Thyroid gland (tissue), 4 donors: ENCODE measurements at regions of chr7 and their contacts with region 1.

Region 1: GRCh38 chr7:128904381-128905197 is 5.9 kb downstream of the KCP start:
- DNase-seq: no peak
- H3K4me3 ChIP-seq: no peak overlapping the region
- H3K27ac ChIP-seq: no peak overlapping the region
- H3K4me1 ChIP-seq: peaks cover under 1% of the 10 kb centered on the region in 2 donors
- H3K27me3 ChIP-seq: no peaks in the 10 kb centered on the region
- CTCF ChIP-seq: peak; percentile 37 to 71 (median 63)
- POLR2A ChIP-seq: no peak

Region 2: DNA sequence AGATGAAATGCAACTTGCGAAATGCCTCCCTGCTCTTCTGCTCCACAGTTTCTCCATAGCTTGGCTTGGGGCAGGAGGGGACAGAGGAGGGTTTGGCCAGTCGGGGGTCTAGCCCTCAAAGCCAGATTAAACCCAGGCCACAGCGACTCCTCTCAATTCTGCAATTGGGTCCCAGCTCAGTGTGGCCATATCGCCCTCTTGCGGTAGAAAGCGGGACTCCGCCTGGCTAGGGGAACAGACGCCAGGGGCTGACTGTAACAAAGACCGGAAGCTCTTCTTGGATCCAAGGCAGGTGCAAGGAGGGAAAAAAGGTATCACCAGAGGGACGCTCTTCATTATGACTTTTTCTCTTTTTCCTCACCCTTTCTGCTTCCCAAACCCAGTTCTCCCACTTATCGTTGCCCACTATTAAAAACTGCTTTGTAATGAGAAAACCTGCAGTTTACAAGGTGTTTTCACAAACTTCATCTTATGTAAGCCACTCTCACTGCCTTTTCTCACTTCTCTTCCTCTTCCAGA is 187.0 kb after region 1 on chr7:
- intact Hi-C with region 1: loop called (anchors 5 kb)
- DNase-seq: peak; percentile 79 to 87
- H3K4me3 ChIP-seq: no peak overlapping the region
- H3K27ac ChIP-seq: no peak overlapping the region
- H3K4me1 ChIP-seq: peaks cover 10 to 24% of the 10 kb centered on the region in 2 donors
- H3K27me3 ChIP-seq: no peaks in the 10 kb centered on the region
- CTCF ChIP-seq: peak; percentile 79 to 99 (median 92)
- POLR2A ChIP-seq: no peak

Region 3: GRCh38 chr7:129210256-129210988 is 305.8 kb after region 1 on chr7:
- intact Hi-C with region 1: loop called (anchors 5 kb)
- DNase-seq: peak; percentile 84 to 87
- H3K4me3 ChIP-seq: no peak overlapping the region
- H3K27ac ChIP-seq: no peak overlapping the region
- H3K4me1 ChIP-seq: peaks cover 0 to under 1% of the 10 kb centered on the region in 2 donors
- H3K27me3 ChIP-seq: no peaks in the 10 kb centered on the region
- CTCF ChIP-seq: peak; percentile 54 to 93 (median 86)
- POLR2A ChIP-seq: no peak